ENCODE measurements at regions of chr11 and their contacts with region 1.

Region 1: GRCh38 chr11:76543006-76543703 is 98.3 kb downstream of the EMSY start:
- DNase-seq: no peak
- H3K4me3 ChIP-seq: no peak overlapping the region
- H3K27ac ChIP-seq: no peak overlapping the region
- H3K4me1 ChIP-seq: no peaks in the 10 kb centered on the region
- H3K27me3 ChIP-seq: no peaks in the 10 kb centered on the region
- CTCF ChIP-seq: no peak

Region 2: DNA sequence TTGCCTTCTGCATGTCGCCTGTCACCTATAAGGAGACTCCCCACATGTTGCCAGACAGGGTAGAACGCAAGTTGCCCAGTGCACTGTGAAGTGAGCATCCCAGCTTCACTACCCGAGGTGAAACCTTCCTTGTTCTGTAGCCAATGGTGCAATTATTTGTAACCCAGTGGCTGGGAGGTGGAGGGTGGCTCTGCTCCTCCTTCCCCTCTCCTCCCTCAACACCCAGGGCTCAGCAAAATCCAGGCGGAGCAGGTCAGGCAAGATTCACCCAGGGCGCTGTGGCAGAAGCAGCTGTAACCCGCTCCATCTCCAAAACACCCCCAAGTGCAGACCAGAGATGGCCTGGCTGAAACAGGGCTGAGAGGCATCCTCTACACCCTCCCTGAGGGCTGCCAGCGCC is 233.4 kb before region 1 on chr11:
- CTCF ChIA-PET with region 1: interaction called, 14 read pairs
- POLR2A ChIA-PET with region 1: no interaction called
- intact Hi-C with region 1: no loop called
- DNase-seq: no peak
- H3K4me3 ChIP-seq: no peak overlapping the region
- H3K27ac ChIP-seq: no peak overlapping the region
- H3K4me1 ChIP-seq: no peaks in the 10 kb centered on the region
- H3K27me3 ChIP-seq: no peaks in the 10 kb centered on the region
- CTCF ChIP-seq: no peak